ENCODE measurements at regions of chr5 and their contacts with region 1.

Region 1: GRCh38 chr5:169583424-169584204 is at the start of gene SPDL1:
- DNase-seq: peak; percentile 97
- total RNA-seq, gene SPDL1: 4.6 TPM

Region 2: DNA sequence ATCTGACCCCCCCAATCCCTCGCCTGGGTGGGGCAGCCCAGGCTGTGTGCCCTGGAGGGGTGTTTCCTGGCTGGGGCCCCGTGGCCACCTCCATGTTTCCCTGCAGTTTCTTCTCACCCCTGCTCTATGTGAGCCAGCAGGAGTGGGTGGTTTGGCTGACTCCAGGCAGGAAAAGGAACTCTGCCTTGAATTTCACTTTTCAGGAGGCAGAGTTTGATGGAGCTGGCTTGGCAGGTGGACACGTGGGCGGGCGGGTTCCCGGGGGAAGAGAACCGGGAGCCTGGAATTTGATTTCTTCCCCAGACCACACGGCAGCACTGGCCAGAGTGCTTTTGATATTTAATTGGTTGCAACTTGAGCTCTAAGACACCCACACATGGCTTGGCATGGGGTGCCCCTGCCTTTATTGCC is 884.6 kb before region 1 on chr5:
- intact Hi-C with region 1: loop called (anchors 10 kb)
- DNase-seq: no peak

Measured in cardiac septum (tissue), 1 donor.